ENCODE measurements at regions of chr1 and their contacts with region 1.

Region 1: GRCh38 chr1:244302889-244303613 is 148.7 kb downstream of the ADSS2 start:
- DNase-seq: no peak
- H3K4me3 ChIP-seq: no peak overlapping the region
- H3K27ac ChIP-seq: no peak overlapping the region
- H3K27me3 ChIP-seq: no peaks in the 10 kb centered on the region
- CTCF ChIP-seq: no peak

Region 2: GRCh38 chr1:243343970-243344937 is 958.8 kb before region 1 on chr1:
- CTCF ChIA-PET with region 1: interaction called, 14 read pairs
- POLR2A ChIA-PET with region 1: no interaction called
- DNase-seq: no peak
- H3K4me3 ChIP-seq: no peak overlapping the region
- H3K27ac ChIP-seq: no peak overlapping the region
- H3K27me3 ChIP-seq: no peaks in the 10 kb centered on the region
- CTCF ChIP-seq: peak; percentile 73

Region 3: DNA sequence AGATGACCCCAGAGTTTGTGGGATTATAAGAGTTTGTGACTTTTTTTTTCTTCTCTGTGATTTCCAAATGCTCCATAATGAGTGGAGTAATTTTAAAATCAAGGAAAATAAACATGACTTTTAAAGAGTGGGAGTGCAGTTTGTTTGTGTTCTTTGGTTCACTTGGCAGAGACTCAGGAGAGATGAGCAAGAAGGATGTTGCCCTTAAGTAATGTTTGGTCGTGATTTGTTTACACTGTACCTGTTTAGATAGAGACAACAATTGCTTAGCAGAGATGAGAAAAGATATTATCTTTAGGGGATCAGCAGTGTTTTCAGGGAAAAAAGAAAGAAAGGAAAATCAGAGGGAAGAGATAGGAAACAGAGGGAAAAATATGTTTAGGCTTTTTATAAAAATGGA is 22.2 kb before region 1 on chr1:
- CTCF ChIA-PET with region 1: interaction called, 15 read pairs
- POLR2A ChIA-PET with region 1: no interaction called
- DNase-seq: peak; percentile 38
- H3K4me3 ChIP-seq: no peak overlapping the region
- H3K27ac ChIP-seq: no peak overlapping the region
- H3K27me3 ChIP-seq: no peaks in the 10 kb centered on the region
- CTCF ChIP-seq: no peak

Region 4: DNA sequence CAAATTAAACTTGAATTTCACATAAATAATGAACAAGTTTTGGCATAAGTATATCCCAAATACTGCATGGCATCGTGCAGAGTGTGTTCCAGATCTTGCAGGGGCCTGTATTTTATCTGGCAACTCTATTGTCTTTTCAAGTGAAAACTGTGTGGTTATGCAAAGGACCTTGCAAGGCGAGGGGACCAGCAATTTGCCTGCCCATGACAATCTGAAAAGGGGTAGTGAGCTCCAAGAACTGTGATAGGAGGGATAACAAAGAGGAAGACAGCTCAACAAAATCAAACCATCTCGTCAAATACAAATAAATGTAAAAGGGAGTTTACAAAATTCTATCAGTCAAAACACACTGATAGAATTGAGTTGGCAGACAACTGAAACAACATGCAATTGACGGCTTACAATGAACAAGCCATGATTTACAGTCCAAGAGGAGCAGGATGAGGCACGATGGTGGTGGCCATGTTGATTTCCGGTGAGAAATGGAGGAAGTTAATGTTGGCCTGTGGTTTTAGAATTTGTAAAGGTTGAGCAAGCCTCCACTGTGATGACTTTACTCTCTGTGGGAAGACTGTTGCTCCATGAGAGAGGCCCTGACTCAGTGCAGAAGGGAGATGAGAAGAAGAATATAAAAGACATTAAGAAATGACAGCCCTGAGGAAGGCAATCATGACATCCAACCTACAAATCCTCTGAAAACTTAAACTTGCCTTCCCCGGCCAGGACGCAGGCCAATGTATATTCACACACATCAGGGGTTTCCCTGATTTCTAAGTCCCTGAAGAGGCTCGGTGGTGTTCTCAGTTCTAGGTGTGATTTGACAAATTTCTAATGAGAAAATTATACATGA is 16.5 kb after region 1 on chr1:
- CTCF ChIA-PET with region 1: interaction called, 30 read pairs
- POLR2A ChIA-PET with region 1: no interaction called
- DNase-seq: peak; percentile 36
- H3K4me3 ChIP-seq: no peak overlapping the region
- H3K27ac ChIP-seq: no peak overlapping the region
- H3K27me3 ChIP-seq: no peaks in the 10 kb centered on the region
- CTCF ChIP-seq: no peak